ENCODE measurements at regions of chr4 and their contacts with region 1.

Region 1: GRCh38 chr4:105471566-105472176 is 2.2 kb downstream of the PPA2 start:
- DNase-seq: peak; percentile 78

Region 2: DNA sequence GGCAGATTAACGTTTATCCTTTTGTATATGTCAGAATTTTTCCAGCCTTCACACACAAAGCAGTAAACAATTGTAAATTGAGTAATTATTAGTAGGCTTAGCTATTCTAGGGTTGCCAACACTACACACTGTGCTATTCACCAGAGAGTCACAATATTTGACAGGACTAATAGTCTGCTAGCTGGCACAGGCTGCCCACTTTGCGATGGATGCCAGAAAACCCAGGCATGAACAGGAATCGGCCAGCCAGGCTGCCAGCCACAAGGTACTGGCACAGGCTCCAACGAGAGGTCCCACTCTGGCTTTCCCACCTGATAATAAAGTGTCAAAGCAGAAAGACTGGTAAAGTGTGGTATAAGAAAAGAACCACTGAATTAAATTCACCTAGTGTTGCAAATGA is 230.2 kb before region 1 on chr4:
- intact Hi-C with region 1: loop called (anchors 5 kb)
- DNase-seq: peak; percentile 79

Region 3: DNA sequence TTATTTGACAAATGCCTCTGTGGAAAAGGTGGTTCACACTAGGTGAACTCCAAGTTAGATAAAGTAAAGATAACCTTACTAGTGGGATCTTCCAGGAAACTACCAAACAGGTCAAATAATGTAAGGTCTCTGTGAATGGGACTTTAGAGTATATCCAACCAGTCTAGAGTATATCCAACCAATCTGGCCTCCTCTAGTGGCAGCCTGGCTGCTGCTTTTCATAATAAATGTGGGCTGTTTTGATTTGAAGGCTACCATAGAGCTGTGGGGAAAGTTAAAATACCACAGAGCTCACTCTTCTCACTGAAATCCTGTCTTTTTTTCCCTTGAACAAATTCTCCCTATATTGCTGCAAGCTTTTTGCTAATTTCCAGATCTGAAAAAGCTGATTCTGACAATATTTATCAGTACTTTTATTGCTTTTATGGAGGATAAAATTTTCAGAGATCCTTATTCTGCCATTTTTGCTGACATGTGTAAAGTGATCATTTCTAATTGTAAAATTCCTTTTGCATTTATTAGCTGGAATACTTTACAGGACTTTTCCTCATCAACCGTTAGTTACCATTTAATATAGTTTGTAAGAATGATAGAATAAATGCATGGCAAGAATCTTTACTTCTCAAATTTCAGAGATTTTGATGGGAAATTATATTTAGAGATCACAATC is 213.7 kb before region 1 on chr4:
- intact Hi-C with region 1: no loop called
- DNase-seq: no peak

Region 4: DNA sequence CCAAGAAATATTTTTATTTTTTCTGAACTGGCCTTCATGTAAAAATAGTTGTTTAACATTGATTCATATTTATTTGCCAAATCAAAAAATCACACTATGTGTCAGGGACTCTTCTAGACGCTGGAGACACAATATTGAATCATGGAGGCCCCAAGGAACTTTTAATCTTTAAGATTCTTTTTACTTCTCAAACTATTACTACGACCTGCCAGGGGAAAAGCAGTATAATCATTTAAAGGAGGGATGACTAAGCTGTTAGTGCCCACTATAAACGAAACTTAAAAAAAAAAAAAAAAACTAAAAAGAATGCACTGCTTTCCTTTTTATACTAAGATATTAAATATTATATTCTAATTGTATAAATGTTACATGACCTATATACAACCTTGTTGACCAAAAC is 82.5 kb before region 1 on chr4:
- intact Hi-C with region 1: loop called (anchors 5 kb)
- DNase-seq: no peak

Region 5: DNA sequence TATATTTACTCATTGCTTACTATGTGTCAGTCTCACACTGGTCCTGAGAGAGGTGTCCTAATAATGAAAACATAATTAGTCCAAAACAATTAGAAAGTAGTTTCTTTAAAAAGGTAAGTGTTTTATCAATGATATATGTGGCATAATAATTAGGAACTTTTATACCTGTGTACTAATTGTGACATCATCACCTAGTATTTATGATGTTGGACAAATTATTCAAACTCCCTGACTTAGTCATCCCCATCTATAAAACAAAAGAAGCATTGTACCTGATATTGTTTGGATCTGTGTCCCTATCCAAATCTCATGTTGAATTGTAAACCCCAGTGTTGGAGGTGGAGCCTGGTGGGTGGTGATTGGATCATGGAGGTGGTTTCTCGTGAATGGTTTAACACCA is 64.9 kb after region 1 on chr4:
- intact Hi-C with region 1: no loop called
- DNase-seq: no peak

Measured in cardiac septum (tissue), 1 donor.